ENCODE measurements at regions of chr14 and their contacts with region 1.

Region 1: GRCh38 chr14:104826189-104826860 is 25.4 kb downstream of the ZBTB42 start:
- DNase-seq: peak; percentile 94
- ATAC-seq: peak; percentile 92
- H3K4me3 Mint-ChIP-seq: peak overlapping the region; percentile 69
- H3K27ac Mint-ChIP-seq: peak overlapping the region; percentile 49
- H3K4me1 Mint-ChIP-seq: peaks cover 16% of the 10 kb centered on the region
- H3K27me3 Mint-ChIP-seq: peaks cover 29% of the 10 kb centered on the region

Region 2: DNA sequence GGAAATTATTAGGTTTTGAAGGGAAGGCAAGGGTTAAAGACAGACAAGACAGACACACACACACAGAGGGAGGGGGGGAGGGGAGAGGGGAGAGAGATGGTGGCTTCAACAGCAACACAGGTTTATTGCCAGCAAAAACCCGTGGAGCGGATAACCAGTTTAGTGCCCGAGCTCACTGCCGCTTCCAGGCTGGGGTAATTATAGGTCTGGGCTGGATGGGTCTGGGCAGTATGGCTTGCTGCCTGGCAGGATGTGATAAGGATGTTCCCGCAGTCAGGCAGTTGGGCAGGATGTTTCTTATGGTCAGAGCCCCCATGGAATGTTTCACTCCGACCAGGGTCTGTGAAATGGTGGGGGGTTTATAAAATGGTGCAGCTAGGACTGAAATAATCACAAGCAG is 902.5 kb before region 1 on chr14:
- CTCF ChIA-PET with region 1: no interaction called
- POLR2A ChIA-PET with region 1: no interaction called
- DNase-seq: no peak
- ATAC-seq: no peak
- H3K4me3 Mint-ChIP-seq: no peak overlapping the region
- H3K27ac Mint-ChIP-seq: no peak overlapping the region
- H3K4me1 Mint-ChIP-seq: peaks cover 8% of the 10 kb centered on the region
- H3K27me3 Mint-ChIP-seq: peaks cover 12% of the 10 kb centered on the region

Region 3: GRCh38 chr14:104752735-104753531 is 73.4 kb before region 1 on chr14 and contains the start of gene SIVA1:
- CTCF ChIA-PET with region 1: interaction called, 12 read pairs
- POLR2A ChIA-PET with region 1: no interaction called
- DNase-seq: peak; percentile 100
- ATAC-seq: peak; percentile 94
- H3K4me3 Mint-ChIP-seq: peak within 1 kb of the TSS; percentile 91
- H3K27ac Mint-ChIP-seq: peak within 1 kb of the TSS; percentile 96
- H3K4me1 Mint-ChIP-seq: peaks cover 54% of the 10 kb centered on the region
- H3K27me3 Mint-ChIP-seq: no peaks in the 10 kb centered on the region
- total RNA-seq, gene SIVA1: 175 to 186 TPM

Region 4: DNA sequence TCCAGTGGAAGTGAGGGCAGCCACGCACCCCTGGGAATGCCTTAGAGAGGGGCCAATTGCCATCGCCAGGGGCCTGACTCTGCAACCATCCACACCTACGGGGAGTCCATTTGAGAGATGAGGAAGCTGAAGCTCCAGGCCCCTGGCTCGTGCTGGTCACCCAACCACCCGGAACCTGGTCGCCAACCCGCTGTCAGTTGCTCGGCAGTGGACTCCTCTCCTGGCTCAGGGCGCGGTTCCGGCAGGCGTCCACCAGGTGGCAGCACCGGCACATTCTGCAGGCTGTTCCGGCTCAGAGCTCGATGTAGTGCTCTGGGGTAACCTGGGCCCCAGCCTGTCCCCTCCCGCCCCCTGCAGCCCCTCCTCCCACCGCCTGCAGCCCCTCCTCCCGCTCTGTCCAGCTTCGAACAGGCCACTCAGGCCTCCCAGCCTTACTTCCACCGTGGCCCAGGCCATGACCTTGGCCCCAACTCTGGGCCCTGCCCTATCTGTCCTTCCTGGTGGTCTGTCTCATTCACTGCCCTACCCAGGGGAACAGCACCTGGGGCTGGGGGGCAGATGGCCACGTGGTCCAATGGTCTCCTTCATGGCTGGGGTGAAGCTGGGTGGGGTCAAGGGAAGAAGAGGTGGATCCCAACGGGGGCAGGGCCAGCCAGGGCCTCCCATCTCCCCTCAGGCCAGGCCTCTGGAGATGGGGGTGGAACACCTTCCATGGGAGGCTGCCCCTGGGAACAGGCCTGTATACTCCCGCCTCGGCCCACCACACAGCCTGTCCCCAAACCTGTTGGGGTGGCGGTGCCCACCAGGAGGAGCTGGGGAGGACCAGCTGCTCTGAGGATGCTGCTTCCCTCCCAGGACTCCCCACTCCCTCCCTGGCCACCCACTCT is 57.6 kb before region 1 on chr14:
- CTCF ChIA-PET with region 1: interaction called, 78 read pairs
- POLR2A ChIA-PET with region 1: interaction called, 4 read pairs
- DNase-seq: peak; percentile 94
- ATAC-seq: peak; percentile 93
- H3K4me3 Mint-ChIP-seq: no peak overlapping the region
- H3K27ac Mint-ChIP-seq: peak overlapping the region; percentile 52
- H3K4me1 Mint-ChIP-seq: peaks cover 6% of the 10 kb centered on the region
- H3K27me3 Mint-ChIP-seq: no peaks in the 10 kb centered on the region

Region 5: DNA sequence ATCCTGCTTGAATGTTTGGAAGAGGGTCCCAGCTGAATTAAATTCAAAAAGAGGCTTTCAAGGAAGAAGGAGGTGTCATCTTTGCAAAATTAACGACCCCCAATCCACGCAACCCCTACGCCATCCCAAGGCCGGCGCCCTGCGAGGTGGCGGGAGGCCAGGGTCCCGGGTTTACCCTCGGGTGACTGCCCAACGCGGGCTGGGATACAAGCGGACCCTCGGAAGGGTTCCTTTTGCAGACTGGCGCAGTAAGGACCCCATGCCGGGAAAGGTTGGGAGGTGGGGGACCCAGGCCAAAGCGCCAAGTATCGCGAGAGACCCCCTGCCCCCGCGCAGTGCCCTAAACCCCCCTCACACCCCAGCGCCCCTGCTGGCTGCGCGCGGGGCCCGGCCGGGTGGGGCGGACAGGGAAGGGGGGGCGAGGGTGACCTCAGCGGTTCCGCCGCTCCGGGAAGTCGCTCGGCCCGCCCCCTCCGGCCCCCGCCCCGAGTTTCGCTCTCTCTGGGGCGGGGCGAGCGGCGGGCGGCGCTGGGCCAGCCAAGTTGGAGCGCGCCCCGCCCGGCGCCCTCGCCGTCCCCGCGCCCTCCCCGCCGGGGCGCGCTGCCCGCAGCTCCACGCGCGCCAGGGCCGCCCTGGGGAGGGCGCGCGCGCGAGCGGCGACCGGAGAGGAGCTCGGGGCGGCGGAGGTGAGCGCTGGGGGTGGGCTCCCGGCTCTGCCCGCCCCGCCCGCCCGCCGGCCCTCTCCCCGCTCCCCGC is 26.1 kb before region 1 on chr14:
- CTCF ChIA-PET with region 1: interaction called, 12 read pairs
- POLR2A ChIA-PET with region 1: interaction called, 8 read pairs
- DNase-seq: peak; percentile 86
- ATAC-seq: peak; percentile 60
- H3K4me3 Mint-ChIP-seq: peak overlapping the region; percentile 26
- H3K27ac Mint-ChIP-seq: peak overlapping the region; percentile 58
- H3K4me1 Mint-ChIP-seq: peaks cover 31% of the 10 kb centered on the region
- H3K27me3 Mint-ChIP-seq: peaks cover 10% of the 10 kb centered on the region